H1 (cell line): ENCODE measurements at regions of chr11 and their contacts with region 1.

Region 1: DNA sequence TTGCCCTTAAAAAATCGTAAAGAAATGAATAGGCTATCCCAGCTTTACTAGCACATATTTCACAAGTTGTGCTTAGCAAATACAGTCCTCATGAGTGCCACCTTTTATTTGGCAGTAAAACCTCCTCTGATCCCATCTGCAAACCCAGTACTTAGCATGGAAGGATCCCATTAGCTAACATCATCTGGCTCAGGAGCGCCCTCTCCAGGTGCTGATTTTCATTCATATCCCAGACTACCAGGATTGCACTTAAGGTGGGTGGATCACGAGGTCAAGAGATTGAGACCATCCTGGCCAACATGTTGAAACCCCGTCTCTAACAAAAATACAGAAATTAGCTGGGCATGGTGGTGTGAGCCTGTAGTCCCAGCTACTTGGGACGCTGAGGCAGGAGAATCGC is 76.1 kb upstream of the PAX6 start:
- DNase-seq: peak in 1 of 2 experiments; percentile 89
- H3K4me3 ChIP-seq: no peak overlapping the region
- H3K27ac ChIP-seq: no peak overlapping the region
- H3K4me1 ChIP-seq: peaks cover 3 to 15% (median 6%) of the 10 kb centered on the region in 4 experiments; a peak in 5 of 7 replicates
- H3K27me3 ChIP-seq: no peaks in the 10 kb centered on the region
- CTCF ChIP-seq: peak; percentile 32 to 69 (median 60)
- EP300 ChIP-seq: no peak
- POLR2A ChIP-seq: no peak
- RAD21 ChIP-seq: peak; percentile 58 to 68; a peak in 3 of 4 replicates

Region 2: DNA sequence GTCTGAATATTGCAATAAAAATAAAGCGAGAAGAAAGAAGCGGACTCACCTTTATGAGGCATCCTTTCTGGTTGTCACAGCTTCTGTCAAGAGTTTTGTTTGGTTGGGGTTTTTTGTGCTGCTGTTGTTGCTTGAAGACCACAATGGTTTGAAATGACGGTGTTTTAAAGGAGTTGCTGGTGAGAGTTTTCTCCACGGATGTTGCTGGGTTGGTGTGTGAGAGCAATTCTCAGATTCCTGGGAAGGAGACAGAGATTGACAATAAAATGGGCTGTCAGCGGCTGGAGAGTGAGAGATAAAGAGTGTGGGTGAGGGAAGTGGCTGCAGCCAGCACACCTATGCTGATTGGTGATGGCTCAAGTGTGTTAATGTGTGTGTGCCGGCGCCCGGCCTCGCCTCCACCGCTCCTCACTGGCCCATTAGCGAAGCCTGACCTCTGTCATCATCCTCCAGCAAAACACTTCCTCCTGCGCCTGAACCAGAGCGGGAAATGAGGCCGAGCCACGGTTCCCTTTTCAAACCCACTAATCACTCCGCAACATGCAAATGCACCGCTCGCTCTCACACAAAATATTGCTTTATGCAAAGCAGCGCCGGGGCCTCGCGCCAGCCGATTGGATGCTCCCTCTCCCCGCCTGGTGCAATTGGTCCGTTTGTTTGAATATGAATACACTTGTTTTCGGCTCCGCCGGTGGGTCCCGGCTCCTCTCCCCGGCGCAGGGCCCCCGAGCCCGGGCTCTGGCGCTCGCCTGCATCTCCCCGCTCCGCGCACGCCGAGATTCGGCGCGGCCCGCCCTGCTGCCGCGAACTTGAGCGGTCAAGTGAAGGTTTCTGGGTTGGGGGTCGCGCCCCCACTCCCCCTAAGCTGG is 76.2 kb before region 1 on chr11 and contains the start of gene PAX6:
- CTCF ChIA-PET with region 1: interaction called, 12 read pairs
- POLR2A ChIA-PET with region 1: no interaction called
- DNase-seq: peak in 1 of 2 experiments; percentile 87
- H3K4me3 ChIP-seq: peak within 1 kb of the TSS; percentile 36 to 62 (median 50)
- H3K27ac ChIP-seq: no peak within 1 kb of the TSS
- H3K4me1 ChIP-seq: peaks cover 22 to 51% (median 41%) of the 10 kb centered on the region in 4 experiments
- H3K27me3 ChIP-seq: peaks cover 87 to 99% (median 96%) of the 10 kb centered on the region in 4 experiments
- CTCF ChIP-seq: no peak
- EP300 ChIP-seq: no peak
- POLR2A ChIP-seq: no peak
- RAD21 ChIP-seq: no peak
- total RNA-seq, gene PAX6: 0.21 and 0.30 TPM in 2 replicates

Region 3: GRCh38 chr11:31817054-31817620 is 70.0 kb before region 1 on chr11:
- CTCF ChIA-PET with region 1: interaction called, 15 read pairs
- POLR2A ChIA-PET with region 1: no interaction called
- DNase-seq: peak in 1 of 2 experiments; percentile 64
- H3K4me3 ChIP-seq: peak overlapping the region in 3 of 4 experiments; percentile 35 to 62 (median 45); a peak in 5 of 8 replicates
- H3K27ac ChIP-seq: no peak overlapping the region
- H3K4me1 ChIP-seq: peaks cover 3 to 70% (median 47%) of the 10 kb centered on the region in 4 experiments
- H3K27me3 ChIP-seq: peaks cover 79 to 100% (median 98%) of the 10 kb centered on the region in 4 experiments
- CTCF ChIP-seq: no peak
- EP300 ChIP-seq: no peak
- POLR2A ChIP-seq: no peak
- RAD21 ChIP-seq: no peak

Region 4: DNA sequence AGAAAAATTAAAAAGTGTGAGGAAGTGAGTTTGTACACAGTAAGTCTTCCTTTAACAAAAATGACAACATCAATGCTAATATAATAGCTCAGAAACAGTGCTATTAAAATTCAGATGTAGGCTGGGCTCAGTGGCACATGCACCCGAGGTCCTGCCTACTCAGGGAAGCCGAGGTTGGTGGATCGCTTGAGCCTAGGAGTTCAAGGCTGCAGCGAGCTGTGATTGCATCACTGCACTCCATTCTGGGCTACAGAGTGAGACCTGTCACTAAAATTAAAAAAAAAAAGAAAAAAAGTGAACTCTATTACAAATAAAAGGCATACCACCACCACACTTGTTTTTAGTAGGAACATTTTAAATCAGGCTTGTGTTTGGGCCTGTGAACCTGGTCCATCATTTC is 36.8 kb before region 1 on chr11:
- CTCF ChIA-PET with region 1: interaction called, 17 read pairs
- POLR2A ChIA-PET with region 1: no interaction called
- DNase-seq: no peak
- H3K4me3 ChIP-seq: no peak overlapping the region
- H3K27ac ChIP-seq: no peak overlapping the region
- H3K4me1 ChIP-seq: peaks cover 0 to 5% (median 2%) of the 10 kb centered on the region in 4 experiments; a peak in 3 of 7 replicates
- H3K27me3 ChIP-seq: no peaks in the 10 kb centered on the region
- CTCF ChIP-seq: no peak
- EP300 ChIP-seq: no peak
- POLR2A ChIP-seq: no peak
- RAD21 ChIP-seq: no peak

Region 5: GRCh38 chr11:31870609-31871309 is 16.4 kb before region 1 on chr11:
- CTCF ChIA-PET with region 1: interaction called, 60 read pairs
- POLR2A ChIA-PET with region 1: interaction called, 3 read pairs
- DNase-seq: peak; percentile 68 to 84
- H3K4me3 ChIP-seq: peak overlapping the region in 1 of 4 experiments; percentile 41; a peak in 2 of 8 replicates
- H3K27ac ChIP-seq: no peak overlapping the region
- H3K4me1 ChIP-seq: peaks cover 8 to 15% (median 8%) of the 10 kb centered on the region in 4 experiments; a peak in 6 of 7 replicates
- H3K27me3 ChIP-seq: peaks cover 0 to 11% (median 4%) of the 10 kb centered on the region in 4 experiments; a peak in 4 of 7 replicates
- CTCF ChIP-seq: peak; percentile 47 to 82 (median 73)
- EP300 ChIP-seq: no peak
- POLR2A ChIP-seq: no peak
- RAD21 ChIP-seq: peak; percentile 84 to 91

Region 6: DNA sequence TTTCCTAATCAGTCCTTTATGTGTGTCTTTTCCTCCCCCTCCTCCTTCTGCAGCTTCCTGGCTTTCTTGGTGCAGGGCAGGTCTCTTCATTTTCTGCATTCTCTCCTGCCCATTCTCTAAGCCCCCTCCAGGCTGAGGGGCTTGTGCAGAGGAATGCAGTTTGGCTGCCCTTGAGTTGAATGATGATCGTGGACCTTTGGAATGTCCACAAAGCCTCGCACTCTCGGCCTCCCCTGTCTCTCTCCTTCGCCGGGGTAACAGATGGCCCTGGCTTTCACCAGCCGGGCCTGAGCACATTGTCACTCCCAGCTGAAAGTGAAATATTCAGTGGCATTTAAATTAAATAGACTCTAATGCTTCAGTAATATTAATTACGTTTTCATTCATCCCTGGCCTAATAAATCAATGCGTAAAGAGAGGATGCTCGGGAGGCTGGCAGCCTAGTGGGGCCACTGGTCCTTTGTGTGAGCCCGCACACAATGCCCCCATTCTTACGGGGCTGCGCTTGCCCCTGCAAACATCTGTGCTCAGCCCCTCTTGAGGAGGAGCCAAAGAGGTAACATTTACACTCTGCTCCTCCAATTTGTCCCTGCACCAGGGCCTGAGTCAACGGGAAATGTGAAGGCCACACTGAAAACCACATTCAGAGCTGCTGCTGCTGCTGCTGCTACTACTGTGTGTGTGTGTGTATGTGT is 11.2 kb before region 1 on chr11:
- CTCF ChIA-PET with region 1: interaction called, 60 read pairs
- POLR2A ChIA-PET with region 1: no interaction called
- DNase-seq: no peak
- H3K4me3 ChIP-seq: no peak overlapping the region
- H3K27ac ChIP-seq: no peak overlapping the region
- H3K4me1 ChIP-seq: peaks cover 6 to 18% (median 15%) of the 10 kb centered on the region in 4 experiments; a peak in 6 of 7 replicates
- H3K27me3 ChIP-seq: peaks cover 0 to 11% (median 2%) of the 10 kb centered on the region in 4 experiments; a peak in 3 of 7 replicates
- CTCF ChIP-seq: no peak
- EP300 ChIP-seq: no peak
- POLR2A ChIP-seq: no peak
- RAD21 ChIP-seq: no peak